GM13977 (cell line): ENCODE measurements at regions of chr17 and their contacts with region 1.

Region 1: DNA sequence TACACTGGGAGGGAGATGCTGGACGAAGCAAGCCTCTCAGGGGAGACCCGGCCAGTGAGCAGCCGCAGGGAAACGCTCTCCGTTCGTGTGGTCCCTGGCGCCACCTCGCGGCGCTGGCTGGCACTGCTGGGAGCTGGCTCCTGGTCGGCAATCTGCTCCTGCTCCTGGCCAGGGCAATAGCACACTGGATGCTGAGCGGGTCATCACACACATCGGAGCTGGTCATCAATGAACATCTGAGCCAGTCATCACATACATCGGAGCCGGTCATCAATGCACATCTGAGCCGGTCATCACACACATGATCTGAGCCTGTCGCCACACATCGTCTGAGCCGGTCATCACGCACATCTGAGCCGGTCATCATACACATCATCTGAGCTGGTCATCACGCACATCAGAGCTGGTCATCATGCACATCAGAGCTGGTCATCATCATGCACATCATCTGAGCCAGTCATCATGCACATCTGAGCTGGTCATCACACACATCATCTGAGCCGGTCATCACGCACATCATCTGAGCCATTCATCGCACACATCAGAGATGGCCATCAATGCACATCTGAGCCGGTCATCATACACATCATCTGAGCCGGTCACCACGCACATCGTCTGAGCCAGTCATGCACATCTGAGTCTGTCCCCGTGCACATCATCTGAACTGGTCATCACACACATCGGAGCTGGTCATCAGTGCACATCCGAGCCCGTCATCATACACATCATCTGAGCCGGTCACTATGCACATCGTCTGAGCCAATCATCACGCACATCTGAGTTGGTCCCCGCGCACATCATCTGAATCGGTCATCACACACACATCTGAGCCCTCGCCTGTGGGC is 217.3 kb downstream of the RBFOX3 start:
- DNase-seq: peak; percentile 88
- CTCF ChIP-seq: peak; percentile 98

Region 2: GRCh38 chr17:79087428-79088143 is 306.0 kb before region 1 on chr17:
- in situ Hi-C with region 1: loop called (anchors 10 kb)
- DNase-seq: peak; percentile 93
- CTCF ChIP-seq: peak; percentile 96

Region 3: GRCh38 chr17:79188048-79188447 is 205.5 kb before region 1 on chr17:
- in situ Hi-C with region 1: loop called (anchors 10 kb)
- DNase-seq: peak; percentile 81
- CTCF ChIP-seq: peak; percentile 72